ENCODE measurements at regions of chr10 and their contacts with region 1.

Region 1: GRCh38 chr10:43340619-43341018 is 30.8 kb upstream of the FXYD4 start:
- DNase-seq: peak; percentile 95
- ATAC-seq: peak; percentile 97
- H3K4me3 ChIP-seq: no peak overlapping the region
- H3K27ac ChIP-seq: no peak overlapping the region
- H3K4me1 ChIP-seq: peaks cover 18% of the 10 kb centered on the region; the same call in 1 of the 2 replicates
- H3K27me3 ChIP-seq: no peaks in the 10 kb centered on the region; the same call in 1 of the 2 replicates
- CTCF ChIP-seq: no peak

Region 2: GRCh38 chr10:43361547-43361946 is 20.9 kb after region 1 on chr10:
- CTCF ChIA-PET with region 1: no interaction called
- POLR2A ChIA-PET with region 1: no interaction called
- intact Hi-C with region 1: loop called (anchors 1 kb)
- DNase-seq: no peak
- ATAC-seq: no peak
- H3K4me3 ChIP-seq: no peak overlapping the region
- H3K27ac ChIP-seq: no peak overlapping the region
- H3K4me1 ChIP-seq: peaks cover 11% of the 10 kb centered on the region
- H3K27me3 ChIP-seq: no peaks in the 10 kb centered on the region
- CTCF ChIP-seq: no peak